ENCODE measurements at regions of chr12 and their contacts with region 1.

Region 1: GRCh38 chr12:31896514-31897039 is 62.6 kb upstream of the RESF1 start:
- DNase-seq: peak; percentile 90
- ATAC-seq: peak; percentile 97
- H3K4me3 Mint-ChIP-seq: peak overlapping the region; percentile 50
- H3K27ac Mint-ChIP-seq: peak overlapping the region; percentile 99
- H3K4me1 Mint-ChIP-seq: peaks cover 57% of the 10 kb centered on the region
- H3K27me3 Mint-ChIP-seq: no peaks in the 10 kb centered on the region

Region 2: DNA sequence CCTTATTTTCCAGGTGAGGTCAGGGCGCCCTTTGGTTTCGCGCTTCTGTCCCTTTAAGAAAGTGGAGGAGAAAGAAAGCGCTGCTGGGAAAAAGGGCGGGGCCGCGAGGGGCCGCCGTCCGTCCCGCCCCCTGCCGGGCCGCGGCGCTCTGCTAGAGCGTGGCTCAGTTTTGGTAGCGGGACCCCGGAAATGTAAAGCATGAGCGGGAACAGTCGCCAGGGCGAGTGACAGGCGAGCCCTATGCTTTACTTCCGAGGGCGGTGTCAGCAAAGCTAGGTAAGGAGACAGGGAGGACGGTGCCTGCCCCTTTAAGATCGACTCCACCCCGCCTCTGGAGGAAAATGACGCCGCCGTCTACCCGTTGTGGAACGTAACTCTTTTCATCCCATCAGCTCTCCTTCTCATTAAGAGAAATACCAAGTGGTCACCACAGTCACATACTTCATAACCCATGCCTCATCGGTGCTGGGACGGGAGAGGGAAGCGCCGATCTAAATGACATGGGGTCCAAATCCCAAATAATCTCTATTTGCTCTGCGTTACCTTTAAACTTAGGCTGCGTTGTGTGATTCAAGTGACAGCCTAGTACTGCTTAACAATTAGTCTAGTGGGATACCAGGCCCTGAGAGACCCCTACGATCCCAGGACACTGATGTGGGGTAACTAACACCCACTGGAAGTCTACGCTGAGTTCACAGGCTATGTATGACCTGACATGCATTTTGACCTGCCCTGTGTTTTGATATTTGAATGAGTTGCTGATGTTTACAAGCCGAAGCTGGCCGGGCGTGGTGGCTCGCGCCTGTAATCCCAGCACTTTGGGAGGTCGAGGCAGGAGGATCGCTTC is 237.3 kb before region 1 on chr12 and contains the start of gene ETFBKMT:
- CTCF ChIA-PET with region 1: no interaction called
- POLR2A ChIA-PET with region 1: interaction called, 3 read pairs
- intact Hi-C with region 1: loop called in 1 of 2 experiments (anchors 1 kb)
- DNase-seq: peak; percentile 96
- ATAC-seq: peak; percentile 99
- H3K4me3 Mint-ChIP-seq: peak within 1 kb of the TSS; percentile 87
- H3K27ac Mint-ChIP-seq: peak within 1 kb of the TSS; percentile 100
- H3K4me1 Mint-ChIP-seq: peaks cover 13% of the 10 kb centered on the region
- H3K27me3 Mint-ChIP-seq: no peaks in the 10 kb centered on the region
- total RNA-seq, gene ETFBKMT: 0.35 to 1.4 TPM

Region 3: DNA sequence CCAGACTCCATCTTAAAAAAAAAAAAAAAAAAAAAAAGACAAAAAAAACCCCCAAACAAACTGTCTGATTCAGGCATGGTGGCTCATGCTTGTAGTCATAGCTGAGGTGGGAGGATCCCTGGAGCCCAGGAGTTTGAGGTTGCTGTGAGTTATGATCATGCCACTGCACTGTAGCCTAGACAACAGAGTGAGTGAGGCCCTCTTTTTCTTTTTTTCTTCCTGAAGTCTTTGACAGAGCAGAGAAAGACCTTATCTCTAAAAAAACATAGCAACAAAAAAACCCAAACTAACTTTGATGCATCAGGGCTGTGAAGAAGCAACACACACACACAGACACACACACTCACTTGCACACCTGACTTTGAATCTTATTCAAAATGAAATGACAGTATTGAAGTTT is 160.1 kb before region 1 on chr12:
- CTCF ChIA-PET with region 1: no interaction called
- POLR2A ChIA-PET with region 1: interaction called, 7 read pairs
- intact Hi-C with region 1: loop called (anchors 1 kb)
- DNase-seq: peak; percentile 82
- ATAC-seq: peak; percentile 82
- H3K4me3 Mint-ChIP-seq: no peak overlapping the region
- H3K27ac Mint-ChIP-seq: peak overlapping the region; percentile 83
- H3K4me1 Mint-ChIP-seq: peaks cover 60% of the 10 kb centered on the region
- H3K27me3 Mint-ChIP-seq: no peaks in the 10 kb centered on the region

Region 4: GRCh38 chr12:31874961-31875608 is 21.5 kb before region 1 on chr12:
- CTCF ChIA-PET with region 1: interaction called, 3 read pairs
- POLR2A ChIA-PET with region 1: no interaction called
- intact Hi-C with region 1: loop called (anchors 1 to 2 kb)
- DNase-seq: peak; percentile 84
- ATAC-seq: peak; percentile 98
- H3K4me3 Mint-ChIP-seq: peak overlapping the region; percentile 49
- H3K27ac Mint-ChIP-seq: peak overlapping the region; percentile 99
- H3K4me1 Mint-ChIP-seq: peaks cover 25% of the 10 kb centered on the region
- H3K27me3 Mint-ChIP-seq: no peaks in the 10 kb centered on the region

Region 5: DNA sequence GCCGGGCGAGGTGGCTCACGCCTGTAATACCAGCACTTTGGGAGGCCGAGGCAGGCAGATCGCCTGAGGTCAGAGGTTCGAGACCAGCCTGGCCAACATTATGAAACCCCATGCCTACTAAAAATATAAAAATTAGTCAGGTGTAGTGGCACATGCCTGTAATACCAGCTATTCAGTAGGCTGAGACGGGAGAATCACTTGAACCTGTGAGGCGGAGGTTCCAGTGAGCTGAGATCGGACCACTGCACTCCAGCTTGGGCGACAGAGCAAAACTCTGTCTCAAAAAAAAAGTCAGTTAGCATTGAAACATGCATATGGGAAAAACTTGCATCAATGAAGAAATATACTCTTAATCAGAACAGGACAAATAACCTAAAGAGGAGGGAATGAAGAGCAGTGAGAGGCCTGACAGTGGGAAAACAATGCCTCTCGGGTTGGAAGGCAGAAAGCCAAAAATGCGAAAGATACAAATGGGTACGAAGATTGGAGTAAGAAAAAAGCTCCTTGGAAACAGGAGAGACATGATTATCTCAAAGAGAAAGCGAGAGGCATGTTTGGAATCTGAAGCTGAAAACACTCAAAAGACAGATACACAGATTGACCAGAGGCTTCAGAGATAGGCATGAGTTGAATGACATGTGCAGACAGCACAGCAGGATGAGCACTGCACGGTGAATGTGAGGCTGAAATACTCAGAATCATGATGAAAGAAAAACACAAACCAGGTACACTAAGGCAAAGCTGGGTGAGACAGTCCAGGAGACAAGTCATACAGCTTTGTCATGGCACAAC is 93.2 kb after region 1 on chr12:
- CTCF ChIA-PET with region 1: interaction called, 3 read pairs
- POLR2A ChIA-PET with region 1: no interaction called
- intact Hi-C with region 1: loop called in 1 of 2 experiments (anchors 2 kb)
- DNase-seq: peak; percentile 27
- ATAC-seq: peak; percentile 44
- H3K4me3 Mint-ChIP-seq: no peak overlapping the region
- H3K27ac Mint-ChIP-seq: peak overlapping the region; percentile 89
- H3K4me1 Mint-ChIP-seq: peaks cover 58% of the 10 kb centered on the region
- H3K27me3 Mint-ChIP-seq: no peaks in the 10 kb centered on the region

Region 6: DNA sequence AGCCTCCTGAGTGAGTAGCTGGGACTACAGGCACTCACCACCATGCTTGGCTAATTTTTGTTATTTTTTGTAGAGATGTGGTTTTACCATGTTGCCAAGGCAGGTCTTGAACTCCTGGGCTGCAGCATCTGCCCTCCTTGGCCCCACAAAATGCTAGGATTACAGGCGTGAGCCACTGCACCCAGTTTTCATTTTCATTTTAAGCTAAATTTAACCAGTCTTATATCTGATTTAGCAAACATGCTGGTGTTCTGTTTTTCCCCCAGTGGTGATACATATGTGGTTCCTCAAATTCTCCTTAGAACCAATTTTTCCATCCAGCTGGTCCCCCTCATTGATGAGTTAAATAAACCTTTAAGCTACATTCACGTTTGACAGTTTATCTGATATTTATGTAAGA is 166.3 kb after region 1 on chr12:
- CTCF ChIA-PET with region 1: no interaction called
- POLR2A ChIA-PET with region 1: no interaction called
- intact Hi-C with region 1: no loop called
- DNase-seq: no peak
- ATAC-seq: no peak
- H3K4me3 Mint-ChIP-seq: no peak overlapping the region
- H3K27ac Mint-ChIP-seq: no peak overlapping the region
- H3K4me1 Mint-ChIP-seq: peaks cover 10% of the 10 kb centered on the region
- H3K27me3 Mint-ChIP-seq: no peaks in the 10 kb centered on the region